Ascending aorta (tissue), 2 donors: ENCODE measurements at regions of chr1 and their contacts with region 1.

Region 1: GRCh38 chr1:17826165-17826488 is 71.0 kb downstream of the ACTL8 start:
- DNase-seq: peak in 1 of 2 donors; percentile 63
- H3K4me3 ChIP-seq: no peak overlapping the region
- H3K27ac ChIP-seq: no peak overlapping the region
- H3K4me1 ChIP-seq: no peaks in the 10 kb centered on the region
- H3K27me3 ChIP-seq: no peaks in the 10 kb centered on the region
- CTCF ChIP-seq: peak; percentile 16 to 56 (median 38)

Region 2: GRCh38 chr1:17661546-17662157 is 164.5 kb before region 1 on chr1:
- intact Hi-C with region 1: loop called (anchors 5 kb)
- DNase-seq: no peak
- H3K4me3 ChIP-seq: no peak overlapping the region
- H3K27ac ChIP-seq: no peak overlapping the region
- H3K4me1 ChIP-seq: peaks cover 0 to 4% of the 10 kb centered on the region in 2 donors
- H3K27me3 ChIP-seq: no peaks in the 10 kb centered on the region
- CTCF ChIP-seq: peak; percentile 65 to 82 (median 76)

Region 3: DNA sequence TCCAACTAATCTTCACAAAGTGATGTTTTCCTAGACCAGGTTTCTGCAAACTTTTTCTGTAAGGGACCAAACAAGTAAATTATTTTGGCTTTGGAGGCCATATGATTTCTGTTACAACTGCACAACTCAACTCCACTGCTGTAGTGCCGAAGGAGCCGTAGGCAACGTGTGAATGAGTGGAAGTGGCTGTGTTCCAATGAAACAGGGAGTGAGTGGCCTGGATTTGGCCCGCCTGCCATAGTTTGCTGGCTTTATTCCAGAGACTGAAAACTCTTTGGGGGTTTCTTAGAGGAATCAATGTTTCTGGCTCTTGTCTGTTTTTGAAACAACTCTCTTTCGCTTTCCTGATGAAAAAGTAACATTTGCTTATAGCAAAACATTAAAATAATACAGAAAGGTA is 83.5 kb before region 1 on chr1:
- intact Hi-C with region 1: no loop called
- DNase-seq: no peak
- H3K4me3 ChIP-seq: no peak overlapping the region
- H3K27ac ChIP-seq: no peak overlapping the region
- H3K4me1 ChIP-seq: no peaks in the 10 kb centered on the region
- H3K27me3 ChIP-seq: no peaks in the 10 kb centered on the region
- CTCF ChIP-seq: no peak

Region 4: GRCh38 chr1:17857996-17858395 is 31.9 kb after region 1 on chr1:
- intact Hi-C with region 1: no loop called
- DNase-seq: no peak
- H3K4me3 ChIP-seq: no peak overlapping the region
- H3K27ac ChIP-seq: no peak overlapping the region
- H3K4me1 ChIP-seq: no peaks in the 10 kb centered on the region
- H3K27me3 ChIP-seq: no peaks in the 10 kb centered on the region
- CTCF ChIP-seq: no peak